ENCODE measurements at regions of chr11 and their contacts with region 1.

Region 1: GRCh38 chr11:57249384-57250319 is 12.6 kb upstream of the APLNR start:
- DNase-seq: no peak
- ATAC-seq: peak; percentile 56

Region 2: DNA sequence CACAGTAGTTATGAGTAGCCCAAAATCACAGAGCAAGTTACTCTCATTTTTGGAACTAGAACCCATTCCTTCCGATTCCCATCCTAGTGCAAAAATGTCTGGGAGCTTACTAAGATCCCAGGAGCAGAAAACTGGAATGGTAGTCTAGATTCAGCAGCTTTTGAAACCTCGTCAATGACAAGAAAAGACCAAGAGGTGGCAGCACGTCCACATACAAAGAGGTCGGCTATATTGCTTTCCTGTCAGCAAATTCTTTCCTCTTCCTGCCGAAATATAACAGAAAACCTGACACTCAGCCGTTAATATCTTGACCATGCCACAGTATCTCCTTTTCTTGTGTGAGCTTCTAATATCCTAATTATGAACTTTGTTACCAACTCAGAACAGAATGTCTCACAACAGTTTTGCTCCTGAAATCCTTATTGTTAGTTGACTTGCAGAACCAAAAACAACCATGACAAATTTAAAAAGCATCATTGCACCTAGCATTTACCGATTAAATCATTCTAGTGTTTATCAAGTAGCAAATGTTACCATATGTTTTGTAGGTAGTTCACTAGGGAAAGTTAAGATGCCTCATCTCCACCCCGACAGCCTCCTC is 408.3 kb before region 1 on chr11:
- intact Hi-C with region 1: loop called (anchors 1 kb)
- DNase-seq: no peak
- ATAC-seq: peak; percentile 46

Region 3: DNA sequence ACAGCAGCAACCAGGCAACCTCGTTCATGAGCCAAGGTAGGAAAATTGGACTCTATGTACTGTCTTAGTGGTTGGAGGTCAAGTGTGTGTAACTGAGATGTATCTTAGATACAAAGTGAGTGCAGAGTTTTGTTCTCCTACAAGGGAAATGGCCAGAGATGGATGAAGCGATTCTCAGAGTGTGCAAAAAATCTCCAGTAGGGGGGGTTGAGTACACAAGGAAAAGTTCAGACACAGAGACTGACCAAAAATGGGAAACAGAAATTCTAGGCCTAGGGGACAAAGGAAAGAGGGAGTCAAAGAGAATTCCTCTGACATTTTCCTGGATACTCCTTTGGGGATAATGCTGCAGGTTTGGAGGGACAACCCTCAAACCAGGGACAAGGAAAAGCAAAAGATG is 299.1 kb before region 1 on chr11:
- intact Hi-C with region 1: loop called (anchors 10 kb)
- DNase-seq: no peak
- ATAC-seq: no peak

Region 4: GRCh38 chr11:57116654-57117053 is 133.0 kb before region 1 on chr11:
- intact Hi-C with region 1: loop called (anchors 1 kb)
- DNase-seq: no peak
- ATAC-seq: peak; percentile 46

Region 5: DNA sequence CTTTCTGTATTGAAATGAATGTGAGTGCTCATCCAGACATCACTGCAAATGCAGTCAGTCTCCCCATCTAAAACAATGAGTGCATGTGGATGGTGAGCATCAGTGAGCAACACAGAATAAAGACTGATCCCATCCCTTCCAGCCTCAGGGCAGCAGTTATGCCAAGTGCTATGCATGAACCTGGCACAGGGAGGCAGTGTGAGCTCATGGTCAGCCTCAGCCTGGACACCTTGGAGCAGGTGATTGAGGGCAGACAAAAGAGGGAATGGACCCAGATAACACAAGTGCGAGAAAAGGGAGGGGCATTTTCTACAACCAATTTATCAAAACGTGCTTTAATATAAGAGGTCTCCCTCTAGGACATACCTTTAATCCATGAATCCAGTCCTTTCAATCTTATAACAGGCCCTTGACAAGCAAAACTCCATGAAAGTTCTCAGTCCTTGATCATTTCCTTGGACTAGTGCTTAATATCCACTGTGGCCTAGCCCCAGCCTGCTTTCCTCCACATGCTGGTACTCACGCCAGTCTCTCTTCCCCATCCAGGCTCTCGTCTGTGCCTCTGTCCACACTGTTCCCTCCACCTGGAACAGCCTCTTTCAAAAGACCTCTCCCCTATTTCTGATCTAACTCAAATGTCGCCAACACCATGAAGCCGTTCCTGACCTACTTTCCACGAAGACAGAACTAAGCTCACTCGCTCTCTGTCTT is 118.4 kb before region 1 on chr11:
- intact Hi-C with region 1: loop called (anchors 1 kb)
- DNase-seq: no peak
- ATAC-seq: peak; percentile 68

Region 6: DNA sequence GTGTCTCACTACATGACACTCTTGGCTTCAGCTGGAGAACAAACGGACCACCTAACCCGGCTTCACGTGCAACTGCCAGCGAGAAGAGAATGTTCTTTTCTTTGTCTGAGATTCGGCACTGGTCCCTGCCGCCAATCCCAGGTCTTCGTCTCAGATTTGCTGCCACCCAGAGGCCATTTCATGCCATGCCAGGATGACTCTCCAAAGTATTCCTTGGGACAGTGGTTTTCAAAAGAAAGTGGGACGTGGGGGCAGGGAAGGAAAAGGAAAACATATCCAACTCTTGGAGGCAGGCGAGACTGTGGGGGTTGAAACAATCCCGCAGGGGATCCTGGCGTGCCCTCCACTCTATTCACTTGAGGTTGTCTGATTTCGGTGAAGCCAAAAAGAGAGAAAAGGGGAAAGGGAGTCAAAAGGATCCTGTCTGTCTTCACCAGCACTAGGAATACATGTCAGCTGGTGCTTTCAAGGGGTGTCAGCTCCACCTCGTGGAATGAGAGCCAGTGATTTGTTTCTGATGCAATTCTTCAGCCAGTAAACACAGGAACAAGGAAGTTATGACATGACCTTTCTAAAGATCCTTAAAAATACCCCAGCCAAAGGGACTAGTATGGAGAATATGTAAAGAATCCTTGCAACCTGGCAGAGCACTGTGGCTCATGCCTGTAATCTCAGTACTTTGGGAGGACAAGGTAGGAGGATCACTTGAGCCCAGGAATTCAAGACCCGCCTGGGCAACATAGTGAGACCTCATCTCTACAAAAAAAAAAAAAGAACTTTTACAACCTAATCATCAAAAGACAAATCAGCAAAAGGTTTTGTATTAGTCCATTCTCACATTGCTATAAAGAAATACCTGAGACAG is 28.4 kb after region 1 on chr11:
- intact Hi-C with region 1: loop called (anchors 2 kb)
- DNase-seq: peak; percentile 79
- ATAC-seq: peak; percentile 83

Region 7: DNA sequence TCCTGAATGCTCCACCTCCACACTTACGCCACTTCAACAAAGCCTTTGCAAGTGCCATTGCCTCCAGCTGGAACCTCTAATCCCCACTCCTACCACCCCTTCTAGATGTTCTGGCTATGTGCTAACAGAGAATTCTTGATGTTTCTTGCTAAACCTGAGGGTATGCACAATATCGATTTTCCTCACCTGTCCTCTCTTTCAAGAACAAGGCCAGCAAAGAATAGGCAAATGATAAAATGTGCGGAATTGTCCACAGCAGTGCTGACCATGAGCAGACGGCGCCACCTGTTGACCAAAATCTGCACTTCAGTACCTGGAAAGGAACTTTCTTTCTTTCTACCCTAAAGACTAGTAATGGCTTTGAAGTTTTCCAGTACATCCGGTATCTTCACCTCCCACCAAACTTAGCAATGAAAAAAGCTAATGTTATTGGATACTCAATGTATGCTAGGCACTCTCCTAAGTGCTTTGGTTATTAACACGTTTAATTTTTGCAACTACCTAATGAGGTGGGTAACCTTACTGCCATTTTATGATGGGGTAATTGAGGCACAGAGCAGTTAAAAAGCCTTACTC is 277.5 kb after region 1 on chr11:
- intact Hi-C with region 1: no loop called
- DNase-seq: no peak
- ATAC-seq: no peak